ENCODE measurements at regions of chr12 and their contacts with region 1.

Region 1: DNA sequence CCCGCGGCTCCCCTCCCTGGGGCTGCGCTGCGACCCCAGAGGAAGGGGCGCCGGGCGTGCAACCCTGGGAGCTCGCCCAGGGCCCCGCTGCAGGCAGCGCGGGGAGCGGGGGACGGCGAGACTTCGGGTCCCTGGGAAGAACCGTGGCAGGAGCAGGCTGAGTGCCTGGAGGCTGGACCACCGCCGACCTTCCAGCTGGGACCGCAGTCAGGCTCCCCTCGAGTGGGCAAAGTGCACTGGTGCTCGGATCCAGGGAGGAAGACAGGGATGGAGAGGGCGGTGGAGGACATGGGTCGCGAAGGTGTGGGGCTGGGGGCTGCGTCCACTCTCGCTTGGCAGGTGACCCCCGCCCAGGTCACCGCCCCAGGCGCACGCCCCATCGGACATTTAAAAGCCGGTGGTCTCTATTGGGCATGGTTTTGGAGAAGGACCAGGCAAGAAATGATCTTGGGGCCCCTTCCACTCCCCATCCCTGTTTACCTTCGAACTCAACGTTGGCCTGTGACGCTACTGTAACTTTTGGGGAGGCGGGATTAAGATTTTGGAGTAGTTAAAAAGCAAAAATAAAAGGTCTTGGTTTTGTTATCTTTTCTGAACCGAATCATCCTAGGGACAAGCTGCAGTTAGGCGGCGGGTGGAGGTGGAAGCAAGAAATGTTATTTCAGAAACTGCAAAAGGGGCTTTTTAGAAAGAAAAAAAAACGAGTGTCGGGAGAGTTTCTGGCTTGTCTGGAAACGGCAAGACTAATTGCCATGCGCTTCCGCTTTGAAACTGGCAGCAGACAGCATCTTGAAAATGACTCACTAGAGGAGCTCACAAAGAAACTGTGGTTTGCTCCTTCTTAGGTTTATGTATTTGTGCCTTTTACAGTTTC is 1.0 kb downstream of the ELK3 start:
- DNase-seq: peak; percentile 91
- H3K4me3 Mint-ChIP-seq: peak overlapping the region; percentile 99
- H3K27ac Mint-ChIP-seq: peak overlapping the region; percentile 100
- H3K4me1 Mint-ChIP-seq: peaks cover 54% of the 10 kb centered on the region
- H3K27me3 Mint-ChIP-seq: no peaks in the 10 kb centered on the region

Region 2: DNA sequence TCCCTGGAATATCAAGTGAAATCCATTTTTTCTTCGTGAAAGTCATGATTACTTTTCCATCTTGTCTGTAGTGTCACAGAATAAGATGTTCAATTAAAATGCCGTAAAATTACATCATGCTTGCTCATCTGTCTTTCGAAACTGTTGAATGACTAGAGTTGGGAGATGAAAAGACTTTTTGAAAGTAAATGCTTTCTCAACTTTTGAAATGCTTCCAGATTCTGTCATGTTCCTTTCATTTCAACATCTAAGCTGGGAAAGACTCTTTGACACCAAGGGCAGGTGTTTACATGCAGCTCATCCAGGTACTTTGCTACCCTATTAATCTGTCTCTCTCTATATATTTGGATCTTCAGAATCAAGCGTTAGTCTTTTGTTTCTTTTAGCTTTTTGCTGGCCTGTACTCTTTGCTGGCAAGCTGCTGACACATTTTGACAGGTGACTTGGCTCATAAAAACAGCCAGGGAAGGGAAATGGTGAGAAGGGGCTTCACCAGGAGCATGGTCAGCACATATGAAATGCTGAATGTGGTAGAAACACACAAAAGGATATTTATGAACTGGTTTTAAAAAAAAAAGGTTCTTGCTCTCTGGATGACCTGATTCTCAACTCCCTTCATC is 798.2 kb before region 1 on chr12:
- CTCF ChIA-PET with region 1: no interaction called
- intact Hi-C with region 1: loop called (anchors 5 kb)
- DNase-seq: peak; percentile 21
- H3K4me3 Mint-ChIP-seq: no peak overlapping the region
- H3K27ac Mint-ChIP-seq: peak overlapping the region; percentile 54
- H3K4me1 Mint-ChIP-seq: peaks cover 22% of the 10 kb centered on the region
- H3K27me3 Mint-ChIP-seq: peaks cover 25% of the 10 kb centered on the region

Region 3: GRCh38 chr12:95460896-95461661 is 734.1 kb before region 1 on chr12:
- CTCF ChIA-PET with region 1: no interaction called
- intact Hi-C with region 1: no loop called
- DNase-seq: no peak
- H3K4me3 Mint-ChIP-seq: no peak overlapping the region
- H3K27ac Mint-ChIP-seq: no peak overlapping the region
- H3K4me1 Mint-ChIP-seq: no peaks in the 10 kb centered on the region
- H3K27me3 Mint-ChIP-seq: no peaks in the 10 kb centered on the region

Region 4: GRCh38 chr12:95674631-95675030 is 520.6 kb before region 1 on chr12:
- CTCF ChIA-PET with region 1: no interaction called
- intact Hi-C with region 1: no loop called
- DNase-seq: no peak
- H3K4me3 Mint-ChIP-seq: no peak overlapping the region
- H3K27ac Mint-ChIP-seq: no peak overlapping the region
- H3K4me1 Mint-ChIP-seq: no peaks in the 10 kb centered on the region
- H3K27me3 Mint-ChIP-seq: no peaks in the 10 kb centered on the region

Region 5: DNA sequence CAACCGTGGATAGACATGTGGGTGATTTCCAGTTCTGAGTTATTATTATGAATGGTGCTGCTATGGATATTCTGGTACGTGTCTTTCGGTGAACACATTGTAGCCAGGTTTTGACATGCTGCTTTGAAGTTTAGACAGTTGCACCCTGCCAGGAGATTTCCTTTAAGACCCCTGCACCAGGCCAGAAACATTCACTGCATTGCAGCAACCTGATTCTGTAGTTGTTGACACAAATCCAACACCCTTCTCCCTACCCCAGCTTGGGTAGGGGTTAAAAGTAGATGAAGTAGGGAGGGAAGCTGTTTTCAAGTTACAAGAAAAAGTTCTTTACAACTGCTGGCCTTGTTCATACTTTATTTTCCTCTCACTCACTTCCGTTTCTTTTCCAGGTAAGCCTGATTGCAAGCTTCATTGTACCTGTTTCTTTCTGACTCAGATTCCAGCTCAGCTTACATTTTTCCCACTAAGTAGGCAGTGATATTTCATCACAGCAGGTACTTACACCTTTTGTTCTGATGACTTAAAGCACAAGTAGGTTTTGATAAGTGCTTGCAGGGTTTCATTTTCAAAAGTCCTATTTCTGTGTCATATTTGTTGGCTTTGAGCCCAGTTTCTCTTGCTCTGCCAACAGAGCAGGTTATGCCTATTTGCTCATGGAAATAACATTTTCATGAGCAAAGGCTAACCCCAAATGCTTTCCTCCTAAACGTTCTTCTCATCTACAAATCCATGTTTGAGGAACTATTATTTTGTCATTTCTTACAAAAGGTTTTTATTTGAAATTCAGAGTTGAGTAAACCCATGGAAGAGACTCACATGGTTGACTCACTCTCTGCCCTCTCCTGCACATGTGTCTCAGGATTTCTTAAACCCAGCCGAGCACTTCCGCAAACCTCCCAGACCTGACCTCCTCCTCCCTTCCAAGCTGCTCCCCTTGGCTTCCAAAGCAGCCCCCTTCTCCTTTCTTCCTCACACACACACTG is 147.7 kb before region 1 on chr12:
- CTCF ChIA-PET with region 1: no interaction called
- intact Hi-C with region 1: loop called (anchors 1 kb)
- DNase-seq: peak; percentile 29
- H3K4me3 Mint-ChIP-seq: peak overlapping the region; percentile 54
- H3K27ac Mint-ChIP-seq: peak overlapping the region; percentile 84
- H3K4me1 Mint-ChIP-seq: peaks cover 52% of the 10 kb centered on the region
- H3K27me3 Mint-ChIP-seq: no peaks in the 10 kb centered on the region

Region 6: DNA sequence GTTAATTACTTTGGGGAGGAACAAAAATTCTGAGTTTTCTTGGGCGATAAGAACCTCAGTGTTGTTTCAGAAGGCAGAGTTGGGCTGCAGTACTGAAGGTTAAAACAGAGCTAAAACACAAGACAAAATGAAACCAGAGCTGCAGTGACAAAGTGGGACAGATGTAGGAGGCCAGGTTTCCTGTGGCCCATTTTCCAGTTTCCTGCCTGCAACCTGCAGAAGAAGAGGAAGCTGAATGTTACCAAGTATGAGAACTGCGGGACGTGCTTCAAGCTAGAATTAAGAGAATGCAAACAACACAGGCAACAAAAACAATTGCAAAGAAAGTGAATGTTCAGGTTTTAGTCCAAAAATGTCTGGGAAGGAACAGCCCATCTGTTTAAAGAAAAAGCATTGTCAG is 16.8 kb after region 1 on chr12:
- CTCF ChIA-PET with region 1: interaction called, 13 read pairs
- intact Hi-C with region 1: loop called (anchors 1 kb)
- DNase-seq: peak; percentile 33
- H3K4me3 Mint-ChIP-seq: peak overlapping the region; percentile 61
- H3K27ac Mint-ChIP-seq: peak overlapping the region; percentile 84
- H3K4me1 Mint-ChIP-seq: peaks cover 85% of the 10 kb centered on the region
- H3K27me3 Mint-ChIP-seq: no peaks in the 10 kb centered on the region

Region 7: GRCh38 chr12:96350982-96351381 is 155.8 kb after region 1 on chr12:
- CTCF ChIA-PET with region 1: no interaction called
- intact Hi-C with region 1: no loop called
- DNase-seq: no peak
- H3K4me3 Mint-ChIP-seq: no peak overlapping the region
- H3K27ac Mint-ChIP-seq: peak overlapping the region; percentile 78
- H3K4me1 Mint-ChIP-seq: peaks cover 73% of the 10 kb centered on the region
- H3K27me3 Mint-ChIP-seq: no peaks in the 10 kb centered on the region

Region 8: DNA sequence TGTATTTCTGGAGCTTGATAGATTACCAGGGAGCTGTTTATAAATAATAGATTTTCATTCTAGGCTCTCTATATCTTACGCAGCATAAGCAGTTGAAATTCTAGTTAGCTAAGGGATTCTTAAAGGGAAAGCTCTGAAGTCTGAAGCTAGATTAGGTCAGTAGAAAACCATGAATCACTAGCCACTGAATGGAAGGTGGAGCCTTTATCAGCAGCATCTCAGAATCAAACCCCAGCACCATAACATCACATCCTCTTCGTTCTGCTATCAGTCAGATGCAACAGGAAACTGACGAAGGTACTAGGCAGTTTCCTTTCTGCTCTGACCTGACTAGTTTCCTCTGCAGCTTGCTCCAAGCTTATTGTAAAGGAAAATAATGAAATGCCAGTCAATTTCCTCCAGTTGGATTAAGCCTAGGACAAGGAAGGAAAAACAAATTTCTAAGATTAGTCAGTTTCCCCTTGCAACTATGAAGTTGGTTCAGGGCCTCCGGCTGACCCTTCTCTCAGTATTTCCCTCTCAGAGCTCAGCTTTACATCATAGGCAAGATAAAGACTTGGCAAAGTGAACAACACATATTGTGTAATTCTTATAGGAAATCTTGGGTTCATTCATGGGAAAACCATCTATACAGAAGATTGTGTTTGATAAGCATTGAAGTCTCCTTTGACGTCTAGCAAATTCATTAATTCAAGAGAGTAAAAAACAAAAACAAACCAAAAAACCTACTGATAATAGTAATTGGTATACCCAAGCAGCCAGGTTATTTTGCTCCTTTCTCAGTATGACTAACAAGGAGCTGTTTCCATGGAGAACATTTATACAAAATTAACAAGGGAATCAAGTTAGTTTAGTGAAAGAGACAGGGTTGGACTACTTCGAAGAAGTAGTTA is 250.7 kb after region 1 on chr12:
- CTCF ChIA-PET with region 1: no interaction called
- intact Hi-C with region 1: loop called (anchors 1 kb)
- DNase-seq: peak; percentile 68
- H3K4me3 Mint-ChIP-seq: peak overlapping the region; percentile 28
- H3K27ac Mint-ChIP-seq: peak overlapping the region; percentile 94
- H3K4me1 Mint-ChIP-seq: peaks cover 39% of the 10 kb centered on the region
- H3K27me3 Mint-ChIP-seq: no peaks in the 10 kb centered on the region

Region 9: DNA sequence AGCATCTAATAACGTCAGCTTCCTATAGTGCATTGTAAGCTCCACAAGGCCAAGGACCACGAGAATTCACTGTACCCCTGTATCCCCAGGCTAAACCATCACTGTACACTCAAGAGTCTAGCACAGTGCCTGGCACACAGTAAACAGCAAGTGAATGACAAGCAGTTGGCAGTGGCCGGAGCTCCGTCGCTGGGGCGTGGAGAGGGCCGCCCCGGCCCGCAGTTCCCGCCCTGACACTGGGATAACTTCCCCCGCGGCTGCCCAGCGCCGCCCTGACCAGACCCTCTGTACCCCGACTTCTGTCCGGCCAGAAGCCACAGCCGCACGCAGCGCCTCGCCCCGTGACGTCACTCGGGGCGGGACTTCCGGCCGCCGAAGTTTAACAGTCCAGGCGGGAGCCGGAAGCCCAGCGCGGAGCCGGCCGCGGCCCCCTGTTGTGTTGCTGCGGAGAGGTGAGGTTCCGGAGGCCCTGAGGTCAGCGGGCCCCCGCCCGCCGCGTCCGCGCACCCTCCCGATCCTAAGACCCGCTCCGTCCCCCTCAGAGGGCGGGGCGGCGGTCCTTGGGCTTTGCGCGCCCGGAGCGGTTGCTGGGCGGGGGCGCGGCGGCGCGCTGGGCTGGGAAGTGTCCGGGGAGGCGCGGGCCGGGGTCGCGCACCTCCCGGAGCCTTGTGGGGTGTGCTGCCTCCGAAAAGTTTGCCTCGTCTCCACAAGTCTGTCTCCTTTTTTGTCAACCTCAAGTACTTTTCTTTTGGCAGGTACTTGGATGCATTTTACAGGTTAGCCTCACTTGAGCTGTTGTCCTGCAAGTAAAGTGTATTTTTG is 711.9 kb after region 1 on chr12 and contains the start of gene NEDD1:
- CTCF ChIA-PET with region 1: no interaction called
- intact Hi-C with region 1: loop called (anchors 2 kb)
- DNase-seq: peak; percentile 82
- H3K4me3 Mint-ChIP-seq: peak within 1 kb of the TSS; percentile 97
- H3K27ac Mint-ChIP-seq: peak within 1 kb of the TSS; percentile 95
- H3K4me1 Mint-ChIP-seq: peaks cover 41% of the 10 kb centered on the region
- H3K27me3 Mint-ChIP-seq: no peaks in the 10 kb centered on the region
- total RNA-seq, gene NEDD1: 61.8 to 63.8 TPM

Measured in activated naive CD4-positive, alpha-beta T cell treated with anti-CD3 and anti-CD28 coated beads for 36 hours (primary cell).